H1 (cell line): ENCODE measurements at regions of chr5 and their contacts with region 1.

Region 1: GRCh38 chr5:14781106-14781505 is 90.5 kb downstream of the ANKH start:
- DNase-seq: no peak
- H3K4me3 ChIP-seq: no peak overlapping the region
- H3K27ac ChIP-seq: no peak overlapping the region
- H3K4me1 ChIP-seq: peaks cover 0 to 11% (median 0%) of the 10 kb centered on the region in 4 experiments; a peak in 2 of 7 replicates
- H3K27me3 ChIP-seq: no peaks in the 10 kb centered on the region
- CTCF ChIP-seq: no peak
- EP300 ChIP-seq: no peak
- POLR2A ChIP-seq: no peak
- RAD21 ChIP-seq: no peak

Region 2: GRCh38 chr5:14720236-14720971 is 60.7 kb before region 1 on chr5:
- CTCF ChIA-PET with region 1: interaction called, 37 read pairs
- POLR2A ChIA-PET with region 1: no interaction called
- DNase-seq: no peak
- H3K4me3 ChIP-seq: no peak overlapping the region
- H3K27ac ChIP-seq: no peak overlapping the region
- H3K4me1 ChIP-seq: no peaks in the 10 kb centered on the region
- H3K27me3 ChIP-seq: no peaks in the 10 kb centered on the region; a peak in 2 of 7 replicates
- CTCF ChIP-seq: peak in 1 of 3 experiments; percentile 12; a peak in 1 of 4 replicates
- EP300 ChIP-seq: no peak
- POLR2A ChIP-seq: no peak
- RAD21 ChIP-seq: peak; percentile 26 to 31; a peak in 3 of 4 replicates

Region 3: DNA sequence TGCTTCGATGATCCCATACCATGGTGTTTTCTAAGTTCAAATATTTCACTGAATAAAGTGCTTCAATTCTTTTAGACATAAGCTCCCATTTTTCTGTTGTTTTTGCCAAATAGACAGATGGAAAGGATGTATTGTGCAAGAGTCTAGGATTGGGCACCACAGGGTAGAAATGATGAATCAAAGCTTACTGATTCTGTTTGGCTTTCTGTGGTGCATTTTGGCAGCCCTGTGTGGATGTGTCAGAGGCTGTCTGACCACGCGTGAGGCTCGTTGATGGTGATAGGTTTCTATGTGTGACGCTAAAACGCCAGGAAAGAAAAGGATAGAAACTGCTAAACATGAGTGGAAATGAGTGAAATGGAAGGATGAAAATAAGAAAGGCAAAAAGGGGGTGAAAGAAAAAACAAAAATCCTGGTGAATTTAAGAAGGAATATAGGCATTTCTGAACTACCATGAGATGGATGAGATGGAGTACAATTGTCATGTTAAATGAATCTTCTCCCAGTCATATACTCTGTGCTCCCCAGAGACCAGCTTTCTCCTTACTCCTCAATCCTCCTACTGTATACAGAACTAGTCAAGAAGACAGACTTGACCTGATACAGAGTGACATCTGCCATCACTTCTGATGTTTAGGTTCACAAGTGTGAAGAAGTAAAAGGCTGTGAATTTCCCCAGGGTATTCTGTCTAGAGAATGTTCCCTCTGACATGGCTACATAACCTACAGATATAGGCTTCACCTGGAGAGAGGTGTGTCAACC is 36.1 kb after region 1 on chr5:
- CTCF ChIA-PET with region 1: no interaction called
- POLR2A ChIA-PET with region 1: no interaction called
- DNase-seq: no peak
- H3K4me3 ChIP-seq: no peak overlapping the region
- H3K27ac ChIP-seq: no peak overlapping the region
- H3K4me1 ChIP-seq: no peaks in the 10 kb centered on the region
- H3K27me3 ChIP-seq: no peaks in the 10 kb centered on the region
- CTCF ChIP-seq: no peak
- EP300 ChIP-seq: no peak
- POLR2A ChIP-seq: no peak
- RAD21 ChIP-seq: no peak

Region 4: GRCh38 chr5:14925326-14925725 is 144.2 kb after region 1 on chr5:
- CTCF ChIA-PET with region 1: no interaction called
- POLR2A ChIA-PET with region 1: no interaction called
- DNase-seq: no peak
- H3K4me3 ChIP-seq: no peak overlapping the region
- H3K27ac ChIP-seq: no peak overlapping the region
- H3K4me1 ChIP-seq: no peaks in the 10 kb centered on the region
- H3K27me3 ChIP-seq: no peaks in the 10 kb centered on the region
- CTCF ChIP-seq: no peak
- EP300 ChIP-seq: no peak
- POLR2A ChIP-seq: no peak
- RAD21 ChIP-seq: no peak

Region 5: GRCh38 chr5:15013654-15014463 is 232.8 kb after region 1 on chr5:
- CTCF ChIA-PET with region 1: no interaction called
- POLR2A ChIA-PET with region 1: no interaction called
- DNase-seq: no peak
- H3K4me3 ChIP-seq: no peak overlapping the region
- H3K27ac ChIP-seq: no peak overlapping the region
- H3K4me1 ChIP-seq: peaks cover 0 to 2% (median 0%) of the 10 kb centered on the region in 4 experiments; a peak in 2 of 7 replicates
- H3K27me3 ChIP-seq: no peaks in the 10 kb centered on the region
- CTCF ChIP-seq: peak in 2 of 3 experiments; percentile 35 to 63; a peak in 2 of 4 replicates
- EP300 ChIP-seq: no peak
- POLR2A ChIP-seq: no peak
- RAD21 ChIP-seq: peak; percentile 74 to 78

Region 6: GRCh38 chr5:15383469-15383868 is 602.4 kb after region 1 on chr5:
- CTCF ChIA-PET with region 1: no interaction called
- POLR2A ChIA-PET with region 1: no interaction called
- DNase-seq: no peak
- H3K4me3 ChIP-seq: no peak overlapping the region
- H3K27ac ChIP-seq: no peak overlapping the region
- H3K4me1 ChIP-seq: no peaks in the 10 kb centered on the region; a peak in 1 of 7 replicates
- H3K27me3 ChIP-seq: no peaks in the 10 kb centered on the region
- CTCF ChIP-seq: peak in 2 of 3 experiments; percentile 68 to 70; a peak in 3 of 4 replicates
- EP300 ChIP-seq: no peak
- POLR2A ChIP-seq: no peak
- RAD21 ChIP-seq: peak; percentile 89 to 93